Sigmoid colon (tissue), 7 donors: ENCODE measurements at regions of chr11 and their contacts with region 1.

Region 1: GRCh38 chr11:86456052-86456939 is 81.6 kb downstream of the CCDC81 start:
- DNase-seq: peak; percentile 92
- H3K4me3 ChIP-seq: no peak overlapping the region
- H3K27ac ChIP-seq: peak overlapping the region in 1 of 4 donors; percentile 39
- H3K4me1 ChIP-seq: peaks cover 0 to 29% (median 16%) of the 10 kb centered on the region in 4 donors
- H3K27me3 ChIP-seq: no peaks in the 10 kb centered on the region
- CTCF ChIP-seq: peak; percentile 82 to 91 (median 88)
- EP300 ChIP-seq: no peak
- POLR2A ChIP-seq: no peak

Region 2: GRCh38 chr11:86431258-86431657 is 25.0 kb before region 1 on chr11:
- intact Hi-C with region 1: no loop called
- DNase-seq: no peak
- H3K4me3 ChIP-seq: no peak overlapping the region
- H3K27ac ChIP-seq: no peak overlapping the region
- H3K4me1 ChIP-seq: no peaks in the 10 kb centered on the region
- H3K27me3 ChIP-seq: no peaks in the 10 kb centered on the region
- CTCF ChIP-seq: no peak
- EP300 ChIP-seq: no peak
- POLR2A ChIP-seq: no peak

Region 3: DNA sequence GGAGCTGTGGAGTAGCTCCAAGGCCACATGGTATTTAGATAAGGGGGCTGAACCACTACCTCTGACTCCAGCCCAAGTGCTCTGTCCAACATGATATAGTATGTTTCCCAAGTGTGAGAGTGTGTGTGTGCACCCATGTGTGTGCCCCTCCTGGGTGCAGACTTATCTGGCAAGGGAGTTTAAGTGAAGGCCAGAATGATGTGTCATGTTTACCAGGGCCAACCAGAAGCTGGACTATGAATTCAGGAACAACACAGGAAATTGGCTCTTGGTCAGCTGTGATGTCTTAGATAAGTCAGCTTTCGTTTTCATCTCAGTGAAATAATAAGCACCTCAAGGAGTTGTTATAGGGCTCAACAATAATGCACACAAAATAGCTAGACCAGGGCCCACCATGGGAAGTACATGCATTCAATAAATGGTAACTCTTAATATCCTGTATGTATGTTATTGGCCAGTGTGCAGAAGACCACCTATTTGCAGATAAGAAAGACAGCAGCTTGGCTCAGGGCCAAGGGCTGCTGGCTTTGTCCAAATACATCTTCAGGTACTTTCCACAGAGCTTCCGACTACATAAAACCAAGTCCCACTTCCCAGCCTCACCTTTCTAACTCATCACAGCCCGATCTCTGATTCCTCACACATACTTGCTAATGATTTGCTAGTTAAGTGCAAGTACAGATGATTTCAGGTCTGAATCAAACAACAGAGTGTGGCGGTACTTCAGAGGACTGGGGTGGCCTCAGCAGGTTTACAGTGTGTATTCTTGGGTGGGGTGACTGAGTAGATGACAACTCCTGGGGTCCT is 95.2 kb after region 1 on chr11:
- intact Hi-C with region 1: no loop called
- DNase-seq: no peak
- H3K4me3 ChIP-seq: no peak overlapping the region
- H3K27ac ChIP-seq: peak overlapping the region; percentile 30 to 56 (median 47)
- H3K4me1 ChIP-seq: peaks cover 0 to 40% (median 23%) of the 10 kb centered on the region in 4 donors
- H3K27me3 ChIP-seq: no peaks in the 10 kb centered on the region
- CTCF ChIP-seq: no peak
- EP300 ChIP-seq: no peak
- POLR2A ChIP-seq: no peak

Region 4: GRCh38 chr11:86571273-86571948 is 115.1 kb after region 1 on chr11:
- intact Hi-C with region 1: loop called (anchors 10 kb)
- DNase-seq: no peak
- H3K4me3 ChIP-seq: no peak overlapping the region
- H3K27ac ChIP-seq: no peak overlapping the region
- H3K4me1 ChIP-seq: peaks cover 0 to 8% (median 5%) of the 10 kb centered on the region in 4 donors
- H3K27me3 ChIP-seq: no peaks in the 10 kb centered on the region
- CTCF ChIP-seq: peak in 1 of 4 experiments; percentile 50
- EP300 ChIP-seq: no peak
- POLR2A ChIP-seq: no peak

Region 5: DNA sequence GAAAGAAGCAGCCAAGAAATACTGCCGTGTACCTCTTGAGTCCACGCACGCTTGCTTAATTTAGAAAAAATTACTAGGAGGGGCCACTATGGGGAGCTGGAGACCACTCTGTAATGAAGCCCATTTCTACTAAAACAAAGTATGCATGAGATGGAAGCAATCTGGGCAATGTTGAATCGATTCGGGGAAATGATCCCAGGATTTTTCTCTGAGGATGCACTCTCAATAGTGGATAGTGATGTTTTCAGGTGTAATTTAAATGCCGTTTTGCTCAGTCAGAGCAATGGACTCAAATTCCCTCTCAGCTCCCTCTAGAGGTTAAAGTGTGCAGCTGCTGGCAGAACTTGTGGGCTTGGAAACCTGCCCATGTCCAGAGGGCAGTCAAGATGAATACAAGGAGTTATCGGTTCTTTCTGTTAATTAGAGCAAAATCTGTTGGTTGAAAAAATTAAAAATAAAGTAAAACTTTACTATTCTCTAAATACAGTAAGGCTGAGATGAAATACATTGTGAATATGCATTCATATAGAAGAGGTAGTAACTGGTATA is 152.0 kb after region 1 on chr11:
- intact Hi-C with region 1: loop called (anchors 1 kb)
- DNase-seq: peak; percentile 88
- H3K4me3 ChIP-seq: peak overlapping the region in 1 of 4 donors; percentile 15
- H3K27ac ChIP-seq: peak overlapping the region; percentile 35 to 75 (median 60)
- H3K4me1 ChIP-seq: peaks cover 0 to 58% (median 38%) of the 10 kb centered on the region in 4 donors
- H3K27me3 ChIP-seq: no peaks in the 10 kb centered on the region
- CTCF ChIP-seq: peak; percentile 88 to 94 (median 91)
- EP300 ChIP-seq: no peak
- POLR2A ChIP-seq: no peak

Region 6: DNA sequence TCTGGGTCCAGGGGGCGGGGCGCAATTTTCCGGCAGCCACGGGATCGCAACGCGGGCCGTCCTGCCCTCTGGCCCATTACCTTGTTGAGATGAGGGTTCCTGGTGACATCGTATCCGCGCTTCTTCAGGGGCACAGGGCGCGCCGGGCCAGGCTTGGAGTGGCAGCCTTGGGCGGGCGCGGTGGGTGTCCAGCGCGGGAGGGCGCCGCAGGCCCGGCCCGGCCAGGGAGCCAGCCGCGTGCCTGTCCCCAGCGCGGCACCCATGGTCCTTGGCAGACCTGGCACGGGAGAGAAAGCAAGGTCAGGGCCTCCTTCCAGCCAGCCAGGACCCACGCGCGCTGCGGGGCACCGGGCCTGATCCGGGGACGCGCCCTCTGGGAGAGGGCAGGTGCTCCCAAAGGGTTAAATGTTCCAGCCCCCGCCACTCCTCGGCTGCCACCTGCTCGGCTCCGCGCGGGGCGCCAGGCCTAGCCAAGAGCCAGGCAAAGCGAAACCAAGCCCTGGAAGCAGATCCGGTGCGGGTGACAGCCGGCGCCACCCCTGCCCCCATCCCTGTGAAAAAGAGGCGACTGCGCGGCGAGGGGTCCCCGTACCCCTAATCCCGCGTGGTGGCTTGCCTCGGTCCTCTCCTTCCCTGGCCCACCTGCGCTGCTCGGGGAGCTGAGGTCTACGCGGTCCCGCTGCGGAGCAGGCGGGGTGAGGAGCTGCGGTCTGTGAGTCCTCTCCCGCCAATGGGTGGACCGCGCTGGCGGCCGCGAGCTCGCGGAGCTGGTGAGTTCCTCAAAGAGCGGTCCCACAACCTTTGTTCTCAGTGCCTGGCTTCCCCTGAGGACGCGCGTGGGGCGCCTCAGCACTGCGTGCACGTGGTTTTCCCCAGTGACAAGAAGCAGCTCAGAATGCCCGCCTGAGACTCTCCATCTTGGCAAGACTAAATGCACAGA is 215.7 kb after region 1 on chr11 and contains the start of gene ME3:
- intact Hi-C with region 1: loop called (anchors 5 kb)
- DNase-seq: peak; percentile 89
- H3K4me3 ChIP-seq: peak within 1 kb of the TSS; percentile 51 to 75 (median 69)
- H3K27ac ChIP-seq: peak within 1 kb of the TSS; percentile 88 to 98 (median 92)
- H3K4me1 ChIP-seq: peaks cover 0 to 73% (median 50%) of the 10 kb centered on the region in 4 donors
- H3K27me3 ChIP-seq: no peaks in the 10 kb centered on the region
- CTCF ChIP-seq: no peak
- EP300 ChIP-seq: peak in 2 of 4 donors; percentile 31 to 65
- POLR2A ChIP-seq: peak in 1 of 2 donors; percentile 27
- total RNA-seq, gene ME3: 25.5 to 53.2 (median 37.0) TPM

Region 7: GRCh38 chr11:86818466-86819192 is 362.3 kb after region 1 on chr11:
- intact Hi-C with region 1: loop called (anchors 1 kb)
- DNase-seq: no peak
- H3K4me3 ChIP-seq: no peak overlapping the region
- H3K27ac ChIP-seq: peak overlapping the region in 3 of 4 donors; percentile 80 to 92 (median 87)
- H3K4me1 ChIP-seq: peaks cover 0 to 58% (median 55%) of the 10 kb centered on the region in 4 donors
- H3K27me3 ChIP-seq: no peaks in the 10 kb centered on the region
- CTCF ChIP-seq: peak; percentile 64 to 82 (median 72)
- EP300 ChIP-seq: peak in 1 of 4 donors; percentile 8
- POLR2A ChIP-seq: no peak

Region 8: GRCh38 chr11:86919557-86920210 is 463.4 kb after region 1 on chr11:
- intact Hi-C with region 1: loop called (anchors 5 kb)
- DNase-seq: no peak
- H3K4me3 ChIP-seq: no peak overlapping the region
- H3K27ac ChIP-seq: peak overlapping the region in 3 of 4 donors; percentile 1 to 55 (median 23)
- H3K4me1 ChIP-seq: peaks cover 0 to 33% (median 16%) of the 10 kb centered on the region in 4 donors
- H3K27me3 ChIP-seq: no peaks in the 10 kb centered on the region
- CTCF ChIP-seq: peak; percentile 28 to 66 (median 48)
- EP300 ChIP-seq: no peak
- POLR2A ChIP-seq: no peak

Region 9: DNA sequence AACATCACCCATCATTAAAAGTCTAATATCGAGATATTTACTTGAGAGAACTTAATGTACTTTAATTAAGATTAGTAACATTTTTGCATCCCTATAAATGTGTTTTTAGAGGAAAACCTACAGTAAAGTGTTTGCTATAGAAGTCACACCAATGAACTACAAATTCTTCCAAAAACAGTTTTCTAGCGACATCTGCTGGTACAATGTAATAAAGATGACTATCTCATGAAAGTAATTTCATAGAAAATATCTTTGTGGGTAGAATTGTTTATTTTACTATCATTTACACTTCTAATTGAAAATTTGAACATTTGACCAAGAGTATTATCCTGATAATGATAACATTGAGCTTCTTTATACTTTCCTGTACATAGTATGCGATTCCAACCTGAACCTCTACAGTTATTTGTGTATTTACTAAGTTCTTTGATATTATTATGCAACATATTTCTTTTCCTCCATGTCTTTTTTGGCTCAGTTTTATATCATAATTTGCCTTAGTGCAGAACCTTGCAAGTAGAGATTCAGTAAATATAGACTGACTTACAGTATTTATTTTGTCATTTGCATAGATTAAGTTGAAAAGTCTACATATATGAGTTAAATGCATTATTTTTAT is 834.1 kb after region 1 on chr11:
- intact Hi-C with region 1: loop called (anchors 10 kb)
- DNase-seq: no peak
- H3K4me3 ChIP-seq: no peak overlapping the region
- H3K27ac ChIP-seq: no peak overlapping the region
- H3K4me1 ChIP-seq: no peaks in the 10 kb centered on the region
- H3K27me3 ChIP-seq: no peaks in the 10 kb centered on the region
- CTCF ChIP-seq: peak; percentile 31 to 74 (median 42)
- EP300 ChIP-seq: no peak
- POLR2A ChIP-seq: no peak